ENCODE measurements at regions of chr12 and their contacts with region 1.

Region 1: DNA sequence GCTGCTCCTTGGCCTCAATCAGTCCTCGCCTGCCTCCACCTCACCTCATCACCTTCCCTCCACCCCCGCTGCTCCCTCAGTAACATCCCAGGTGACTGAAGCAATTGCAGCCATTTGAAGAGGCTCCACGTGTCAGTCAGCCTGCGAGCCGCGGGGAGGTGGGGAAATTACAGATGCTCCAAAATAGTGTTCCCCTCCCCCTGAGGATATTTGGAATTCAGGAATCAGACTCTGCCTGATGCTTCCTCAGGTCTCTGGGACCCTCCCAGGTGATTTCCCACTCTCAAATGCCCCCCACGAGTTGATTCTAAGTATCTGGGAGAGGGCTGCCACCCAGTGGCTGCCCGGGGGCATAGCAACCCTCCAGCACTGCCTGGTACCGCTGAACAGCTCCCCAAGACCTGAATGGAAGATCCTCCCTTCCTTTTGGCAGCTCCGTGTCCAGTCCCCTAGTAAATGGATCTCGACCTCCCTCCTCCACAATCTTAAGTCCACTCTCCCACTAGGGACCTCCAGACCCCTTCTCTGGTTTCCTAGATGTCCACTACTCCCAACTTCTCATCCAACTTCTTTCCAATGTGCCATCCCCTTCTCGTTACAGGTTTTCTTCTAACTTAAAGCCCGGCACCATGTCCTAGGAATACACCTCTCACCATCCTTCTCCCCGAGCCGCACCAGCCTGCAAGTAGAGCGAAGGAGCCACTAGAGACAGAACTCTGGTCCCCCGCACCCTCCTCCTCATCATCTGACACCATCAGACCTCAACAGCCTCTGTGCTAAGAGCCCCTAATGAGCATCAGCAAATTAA is 1.4 kb upstream of the ASIC1 start:
- DNase-seq: peak; percentile 30
- ATAC-seq: peak; percentile 61
- H3K4me3 ChIP-seq: peak overlapping the region in 1 of 3 experiments; percentile 46; a peak in 2 of 6 replicates
- H3K27ac ChIP-seq: no peak overlapping the region
- H3K4me1 ChIP-seq: peaks cover 34% of the 10 kb centered on the region
- H3K27me3 ChIP-seq: peaks cover 9 to 59% of the 10 kb centered on the region in 2 experiments; a peak in 4 of 5 replicates
- CTCF ChIP-seq: peak; percentile 91
- EP300 ChIP-seq: no peak
- POLR2A ChIP-seq: no peak
- RAD21 ChIP-seq: peak; percentile 86

Region 2: DNA sequence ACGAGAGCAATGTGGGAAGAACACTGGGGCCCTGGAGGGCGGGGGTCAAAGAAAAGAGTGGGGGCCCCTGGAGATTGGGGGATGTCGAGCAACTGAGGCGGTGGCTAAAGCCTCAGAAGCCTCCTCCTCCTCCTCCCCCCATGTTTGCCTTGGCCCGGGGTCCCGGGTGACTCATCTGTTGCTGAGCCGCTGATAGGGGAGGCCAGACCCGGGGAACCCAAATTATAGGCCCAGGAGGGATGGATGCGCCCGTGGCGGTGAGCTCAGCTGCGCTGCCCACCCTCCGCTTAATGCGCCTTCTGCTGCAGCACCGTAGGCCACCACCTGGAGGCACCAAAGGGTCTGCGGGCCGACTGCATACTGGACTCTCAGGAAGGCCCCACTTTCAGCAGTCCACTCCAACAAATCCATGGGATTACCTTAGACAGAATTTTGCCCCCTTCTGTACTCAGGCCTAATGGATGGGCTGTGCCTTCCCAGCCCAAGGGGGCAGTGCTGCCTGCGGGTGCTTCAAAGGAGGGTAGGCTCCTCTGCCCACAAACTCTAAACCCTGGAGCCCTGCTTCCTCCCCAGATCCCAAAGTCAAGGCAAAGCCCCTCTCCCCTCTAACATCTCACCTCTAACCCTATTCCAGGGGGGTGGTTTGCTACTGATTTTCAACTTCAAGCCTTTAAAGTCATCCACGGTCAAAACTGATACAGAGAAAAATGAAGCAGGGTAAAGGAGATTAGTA is 1081.9 kb before region 1 on chr12:
- CTCF ChIA-PET with region 1: no interaction called
- POLR2A ChIA-PET with region 1: no interaction called
- in situ Hi-C with region 1: no loop called
- intact Hi-C with region 1: no loop called
- DNase-seq: no peak
- ATAC-seq: peak; percentile 64
- H3K4me3 ChIP-seq: no peak overlapping the region
- H3K27ac ChIP-seq: no peak overlapping the region
- H3K4me1 ChIP-seq: peaks cover 73% of the 10 kb centered on the region
- H3K27me3 ChIP-seq: peaks cover 27 to 79% of the 10 kb centered on the region in 2 experiments
- CTCF ChIP-seq: peak; percentile 79
- EP300 ChIP-seq: no peak
- POLR2A ChIP-seq: no peak
- RAD21 ChIP-seq: peak; percentile 47

Region 3: GRCh38 chr12:49967042-49967776 is 88.8 kb before region 1 on chr12:
- CTCF ChIA-PET with region 1: interaction called, 65 read pairs
- POLR2A ChIA-PET with region 1: interaction called, 3 read pairs
- in situ Hi-C with region 1: loop called (anchors 5 kb)
- intact Hi-C with region 1: loop called (anchors 1 kb)
- DNase-seq: peak; percentile 71
- ATAC-seq: peak; percentile 79
- H3K4me3 ChIP-seq: peak overlapping the region; percentile 33 to 69 (median 40); a peak in 5 of 6 replicates
- H3K27ac ChIP-seq: no peak overlapping the region
- H3K4me1 ChIP-seq: peaks cover 54% of the 10 kb centered on the region
- H3K27me3 ChIP-seq: peaks cover 5 to 65% of the 10 kb centered on the region in 2 experiments
- CTCF ChIP-seq: peak; percentile 91
- EP300 ChIP-seq: no peak
- POLR2A ChIP-seq: no peak
- RAD21 ChIP-seq: peak; percentile 91

Region 4: DNA sequence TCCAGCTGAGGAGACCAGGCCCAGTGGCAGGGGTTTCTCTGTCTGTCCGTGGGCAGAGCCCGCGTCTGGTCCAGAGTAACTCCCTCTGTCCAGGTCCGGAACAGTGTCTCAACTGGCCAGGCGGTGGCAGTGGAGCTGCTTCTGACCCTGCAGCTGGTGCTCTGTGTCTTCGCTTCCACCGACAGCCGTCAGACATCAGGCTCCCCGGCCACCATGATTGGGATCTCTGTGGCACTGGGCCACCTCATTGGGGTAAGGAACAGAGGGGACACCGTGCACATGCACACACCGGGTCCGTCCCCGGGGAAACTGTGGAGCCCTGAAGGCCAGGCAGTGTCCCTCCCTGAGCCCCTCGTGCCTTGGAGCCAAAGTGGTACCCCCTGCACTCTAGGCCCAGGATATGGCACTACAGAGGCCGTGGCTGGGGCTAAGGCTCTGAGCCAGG is 81.8 kb before region 1 on chr12:
- CTCF ChIA-PET with region 1: interaction called, 65 read pairs
- POLR2A ChIA-PET with region 1: no interaction called
- in situ Hi-C with region 1: loop called (anchors 5 kb)
- intact Hi-C with region 1: loop called (anchors 1 kb)
- DNase-seq: peak; percentile 58
- ATAC-seq: peak; percentile 87
- H3K4me3 ChIP-seq: peak overlapping the region in 1 of 3 experiments; percentile 63; a peak in 1 of 6 replicates
- H3K27ac ChIP-seq: no peak overlapping the region
- H3K4me1 ChIP-seq: peaks cover 56% of the 10 kb centered on the region
- H3K27me3 ChIP-seq: peaks cover 1 to 34% of the 10 kb centered on the region in 2 experiments
- CTCF ChIP-seq: peak; percentile 93
- EP300 ChIP-seq: no peak
- POLR2A ChIP-seq: no peak
- RAD21 ChIP-seq: peak; percentile 85

Region 5: GRCh38 chr12:50038336-50038735 is 17.7 kb before region 1 on chr12:
- CTCF ChIA-PET with region 1: interaction called, 21 read pairs
- POLR2A ChIA-PET with region 1: no interaction called
- in situ Hi-C with region 1: no loop called
- intact Hi-C with region 1: loop called (anchors 2 kb)
- DNase-seq: no peak
- ATAC-seq: no peak
- H3K4me3 ChIP-seq: no peak overlapping the region
- H3K27ac ChIP-seq: no peak overlapping the region
- H3K4me1 ChIP-seq: peaks cover 27% of the 10 kb centered on the region
- H3K27me3 ChIP-seq: peaks cover 4 to 16% of the 10 kb centered on the region in 2 experiments; a peak in 3 of 5 replicates
- CTCF ChIP-seq: no peak
- EP300 ChIP-seq: no peak
- POLR2A ChIP-seq: no peak
- RAD21 ChIP-seq: no peak

Measured in HepG2 (cell line).